ENCODE measurements at regions of chr20 and their contacts with region 1.

Region 1: GRCh38 chr20:38875175-38875993 is 50.8 kb upstream of the FAM83D start:
- DNase-seq: peak; percentile 66
- ATAC-seq: peak; percentile 55
- H3K4me3 Mint-ChIP-seq: peak overlapping the region; percentile 76
- H3K27ac Mint-ChIP-seq: peak overlapping the region; percentile 87
- H3K4me1 Mint-ChIP-seq: peaks cover 72% of the 10 kb centered on the region
- H3K27me3 Mint-ChIP-seq: no peaks in the 10 kb centered on the region

Region 2: GRCh38 chr20:38722683-38723016 is 152.7 kb before region 1 on chr20:
- POLR2A ChIA-PET with region 1: no interaction called
- DNase-seq: no peak
- ATAC-seq: no peak
- H3K4me3 Mint-ChIP-seq: no peak overlapping the region
- H3K27ac Mint-ChIP-seq: peak overlapping the region; percentile 1
- H3K4me1 Mint-ChIP-seq: peaks cover 26% of the 10 kb centered on the region
- H3K27me3 Mint-ChIP-seq: peaks cover 86% of the 10 kb centered on the region

Region 3: DNA sequence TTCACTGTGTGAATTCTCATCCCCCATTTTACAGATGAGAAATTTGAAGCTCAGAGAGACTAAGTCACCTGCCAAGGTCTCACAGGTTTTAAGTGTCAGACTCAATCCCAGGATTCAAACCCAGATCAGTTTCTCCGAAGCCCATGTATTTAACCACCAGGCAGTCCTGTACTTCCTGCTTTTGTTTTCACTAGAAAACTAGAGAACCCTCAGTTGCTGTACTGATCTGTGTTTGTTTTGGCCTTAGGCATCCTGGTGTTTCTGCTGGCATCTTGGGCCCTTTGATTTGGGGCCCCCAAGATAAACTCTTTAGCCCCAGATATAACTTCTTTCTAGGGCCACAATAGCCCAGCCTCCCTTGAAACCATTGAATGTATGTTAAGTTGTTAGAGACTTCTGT is 33.4 kb before region 1 on chr20:
- POLR2A ChIA-PET with region 1: interaction called, 10 read pairs
- DNase-seq: no peak
- ATAC-seq: peak; percentile 66
- H3K4me3 Mint-ChIP-seq: peak overlapping the region; percentile 72
- H3K27ac Mint-ChIP-seq: peak overlapping the region; percentile 83
- H3K4me1 Mint-ChIP-seq: peaks cover 54% of the 10 kb centered on the region
- H3K27me3 Mint-ChIP-seq: no peaks in the 10 kb centered on the region

Region 4: GRCh38 chr20:38962044-38962927 is 86.9 kb after region 1 on chr20 and contains the start of gene DHX35:
- POLR2A ChIA-PET with region 1: interaction called, 14 read pairs
- DNase-seq: peak; percentile 99
- ATAC-seq: peak; percentile 98
- H3K4me3 Mint-ChIP-seq: peak within 1 kb of the TSS; percentile 95
- H3K27ac Mint-ChIP-seq: peak within 1 kb of the TSS; percentile 95
- H3K4me1 Mint-ChIP-seq: peaks cover 32% of the 10 kb centered on the region
- H3K27me3 Mint-ChIP-seq: no peaks in the 10 kb centered on the region
- total RNA-seq, gene DHX35: 10.3 to 10.7 TPM

Measured in activated naive CD8-positive, alpha-beta T cell treated with anti-CD3 and anti-CD28 coated beads, Interleukin-2, amount 10 ng/mL, durations not matched to agents 7 days and 5 days (primary cell).